Posterior vena cava (tissue), 2 donors: ENCODE measurements at regions of chr11 and their contacts with region 1.

Region 1: GRCh38 chr11:69854719-69855118 is 35.5 kb upstream of the FGF3 start:
- DNase-seq: no peak

Region 2: DNA sequence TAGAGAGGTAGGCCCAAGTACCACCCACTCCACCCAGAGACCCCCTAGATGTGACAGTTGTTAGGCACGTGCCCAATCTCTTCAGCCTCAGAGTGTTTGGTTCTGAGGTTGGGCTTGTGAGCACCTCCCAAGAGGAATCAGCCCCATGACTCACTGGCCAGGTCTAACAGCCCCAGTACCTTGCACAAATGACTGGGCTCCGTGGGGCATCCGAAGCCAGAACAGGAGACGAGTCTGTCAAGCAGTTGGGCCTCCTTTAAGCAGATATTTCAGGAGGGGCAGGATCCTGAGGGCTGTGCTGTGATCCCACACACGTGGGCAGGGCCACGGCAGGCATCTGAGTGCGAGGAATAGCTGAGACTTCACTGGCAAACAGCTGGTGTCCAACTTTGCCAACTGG is 121.8 kb before region 1 on chr11:
- intact Hi-C with region 1: loop called in 1 of 2 experiments (anchors 10 kb)
- DNase-seq: no peak

Region 3: DNA sequence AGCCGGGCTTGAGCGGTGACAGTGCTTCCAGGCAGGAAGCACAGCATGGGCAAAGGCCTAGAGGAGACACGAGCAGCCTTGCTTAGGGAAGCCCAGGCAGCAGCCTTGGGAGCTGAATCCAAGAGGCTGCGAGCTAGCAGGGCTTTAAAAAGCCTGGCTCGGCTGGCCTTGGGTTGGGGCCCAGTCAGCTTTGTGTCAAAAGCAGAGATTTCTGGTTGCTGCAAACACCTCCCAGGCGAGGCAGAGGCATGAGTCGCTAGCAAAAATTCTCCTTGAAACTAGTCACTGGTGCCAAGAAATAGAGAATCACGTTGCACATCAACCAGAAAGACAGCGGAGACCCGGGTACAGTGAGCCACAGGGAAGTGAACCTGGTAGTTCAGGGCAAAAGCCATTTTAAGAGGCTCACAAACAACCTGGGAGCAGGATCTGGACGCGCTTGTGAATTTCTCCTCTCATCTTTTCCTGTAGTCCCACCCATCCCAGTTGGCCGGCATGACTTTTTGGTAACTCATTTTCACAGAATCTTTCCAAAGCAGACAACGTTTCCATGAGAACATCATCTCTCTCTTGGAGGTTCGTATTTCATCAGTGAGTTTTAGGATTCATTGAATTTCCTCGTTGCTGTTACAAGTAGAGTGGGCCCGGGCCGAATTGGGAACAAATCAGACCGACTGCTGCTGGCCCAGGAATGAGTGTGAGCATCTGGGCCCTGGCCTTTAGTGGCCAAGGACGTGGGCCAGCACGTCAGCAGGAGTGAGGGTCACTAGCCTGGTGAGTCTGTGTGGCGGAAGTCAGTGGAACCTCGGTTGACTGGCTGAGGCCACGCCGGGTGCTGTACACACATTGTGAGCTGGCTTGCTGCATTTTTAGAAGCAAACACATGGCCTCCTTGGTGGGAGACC is 63.2 kb before region 1 on chr11:
- intact Hi-C with region 1: no loop called
- DNase-seq: peak; percentile 90